Left colon (tissue), 2 donors: ENCODE measurements at regions of chr11 and their contacts with region 1.

Region 1: DNA sequence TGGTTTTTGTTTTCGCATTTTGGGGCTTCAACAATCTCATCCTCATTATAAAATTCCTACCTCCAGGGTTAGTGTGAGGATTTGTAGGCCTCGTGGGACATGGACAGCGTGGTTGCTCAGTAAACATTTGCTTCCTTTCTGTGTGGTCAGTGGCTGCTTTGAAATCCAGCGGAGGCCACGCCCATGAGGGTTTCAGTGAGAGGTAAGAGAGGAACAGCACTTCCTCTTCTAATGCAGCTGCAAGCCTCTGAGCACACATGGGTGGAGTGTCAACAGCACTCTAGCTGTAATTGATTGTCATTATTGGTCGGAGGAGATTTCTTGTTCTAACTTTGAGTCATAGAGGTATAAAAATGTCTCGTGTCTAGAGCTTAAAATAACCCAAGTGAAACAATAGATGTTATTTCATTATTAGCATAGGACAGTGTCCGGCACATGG is 6.0 kb upstream of the ARHGAP42 start:
- DNase-seq: peak; percentile 88 to 89
- ATAC-seq: peak; percentile 98

Region 2: GRCh38 chr11:100930185-100930778 is 249.2 kb after region 1 on chr11:
- intact Hi-C with region 1: loop called in 1 of 2 experiments (anchors 5 kb)
- DNase-seq: no peak
- ATAC-seq: peak; percentile 67